Activated naive CD4-positive, alpha-beta T cell treated with anti-CD3 and anti-CD28 coated beads for 36 hours (primary cell): ENCODE measurements at regions of chr1 and their contacts with region 1.

Region 1: GRCh38 chr1:27940297-27940696 is 5.5 kb downstream of the SMPDL3B start:
- DNase-seq: peak; percentile 90
- H3K4me3 Mint-ChIP-seq: no peak overlapping the region
- H3K27ac Mint-ChIP-seq: peak overlapping the region; percentile 15
- H3K4me1 Mint-ChIP-seq: peaks cover 26% of the 10 kb centered on the region
- H3K27me3 Mint-ChIP-seq: peaks cover 7% of the 10 kb centered on the region

Region 2: DNA sequence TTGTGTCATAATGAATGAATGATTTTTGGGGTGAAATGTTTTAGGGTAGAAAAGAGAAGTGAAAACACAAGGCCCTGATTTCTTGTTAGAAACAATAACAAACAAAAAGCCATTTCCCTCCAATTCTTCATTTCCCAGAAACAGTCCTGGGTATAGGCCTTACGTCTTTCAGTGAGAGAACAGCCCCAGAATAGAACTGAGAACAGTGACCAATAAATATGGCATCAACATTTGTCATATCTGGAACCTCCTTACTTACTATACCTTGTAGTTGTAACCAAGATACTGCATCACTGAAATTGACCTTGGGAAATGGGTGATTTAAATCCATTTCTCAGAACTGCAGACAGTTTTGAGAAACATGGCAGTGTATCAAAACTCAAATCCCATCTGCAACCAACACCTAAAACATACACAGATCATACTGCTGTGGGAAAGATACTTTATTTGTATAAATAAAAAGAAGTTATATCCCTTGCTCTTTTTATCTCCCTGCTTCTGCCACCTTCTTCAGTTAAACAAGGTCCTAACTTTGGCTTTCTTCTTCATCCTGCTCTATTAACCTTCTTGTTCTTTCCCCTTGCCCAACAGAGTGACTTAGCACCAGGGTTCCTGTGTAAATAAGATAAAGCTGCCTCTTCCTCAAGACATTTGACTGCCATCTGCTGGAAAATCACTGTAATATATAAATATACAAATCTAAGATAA is 39.0 kb after region 1 on chr1:
- CTCF ChIA-PET with region 1: interaction called, 6 read pairs
- intact Hi-C with region 1: loop called (anchors 1 kb)
- DNase-seq: no peak
- H3K4me3 Mint-ChIP-seq: no peak overlapping the region
- H3K27ac Mint-ChIP-seq: no peak overlapping the region
- H3K4me1 Mint-ChIP-seq: no peaks in the 10 kb centered on the region
- H3K27me3 Mint-ChIP-seq: no peaks in the 10 kb centered on the region

Region 3: DNA sequence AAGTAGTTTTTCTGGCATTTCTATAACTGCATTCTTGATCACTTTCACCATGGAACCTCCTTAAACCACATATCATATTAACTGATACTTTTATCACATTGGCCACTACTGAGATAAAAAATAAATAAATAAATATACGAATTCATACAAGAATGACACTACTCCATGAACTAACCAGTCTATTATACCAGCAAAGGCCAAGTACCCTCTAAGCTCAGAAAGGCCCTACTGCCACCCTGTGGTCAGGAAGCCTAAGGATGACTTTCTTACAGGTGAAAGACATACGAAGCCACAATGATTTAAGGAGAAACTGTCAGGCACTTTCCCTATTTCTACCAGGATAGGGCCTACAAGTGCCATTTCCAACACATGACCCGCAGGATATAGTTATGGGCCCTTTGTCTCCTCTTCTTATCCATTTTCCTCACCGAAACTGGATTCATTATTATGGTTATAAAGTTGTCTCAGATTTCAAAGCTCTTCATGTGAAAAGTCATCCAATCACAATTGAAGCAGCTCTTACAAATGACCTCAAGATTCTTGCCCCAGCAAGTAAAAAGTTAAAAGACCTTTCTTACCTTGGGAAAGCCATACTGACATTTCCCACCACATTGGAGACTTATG is 268.6 kb after region 1 on chr1:
- CTCF ChIA-PET with region 1: no interaction called
- intact Hi-C with region 1: loop called (anchors 2 kb)
- DNase-seq: peak; percentile 82
- H3K4me3 Mint-ChIP-seq: no peak overlapping the region
- H3K27ac Mint-ChIP-seq: no peak overlapping the region
- H3K4me1 Mint-ChIP-seq: peaks cover 2% of the 10 kb centered on the region
- H3K27me3 Mint-ChIP-seq: no peaks in the 10 kb centered on the region

Region 4: DNA sequence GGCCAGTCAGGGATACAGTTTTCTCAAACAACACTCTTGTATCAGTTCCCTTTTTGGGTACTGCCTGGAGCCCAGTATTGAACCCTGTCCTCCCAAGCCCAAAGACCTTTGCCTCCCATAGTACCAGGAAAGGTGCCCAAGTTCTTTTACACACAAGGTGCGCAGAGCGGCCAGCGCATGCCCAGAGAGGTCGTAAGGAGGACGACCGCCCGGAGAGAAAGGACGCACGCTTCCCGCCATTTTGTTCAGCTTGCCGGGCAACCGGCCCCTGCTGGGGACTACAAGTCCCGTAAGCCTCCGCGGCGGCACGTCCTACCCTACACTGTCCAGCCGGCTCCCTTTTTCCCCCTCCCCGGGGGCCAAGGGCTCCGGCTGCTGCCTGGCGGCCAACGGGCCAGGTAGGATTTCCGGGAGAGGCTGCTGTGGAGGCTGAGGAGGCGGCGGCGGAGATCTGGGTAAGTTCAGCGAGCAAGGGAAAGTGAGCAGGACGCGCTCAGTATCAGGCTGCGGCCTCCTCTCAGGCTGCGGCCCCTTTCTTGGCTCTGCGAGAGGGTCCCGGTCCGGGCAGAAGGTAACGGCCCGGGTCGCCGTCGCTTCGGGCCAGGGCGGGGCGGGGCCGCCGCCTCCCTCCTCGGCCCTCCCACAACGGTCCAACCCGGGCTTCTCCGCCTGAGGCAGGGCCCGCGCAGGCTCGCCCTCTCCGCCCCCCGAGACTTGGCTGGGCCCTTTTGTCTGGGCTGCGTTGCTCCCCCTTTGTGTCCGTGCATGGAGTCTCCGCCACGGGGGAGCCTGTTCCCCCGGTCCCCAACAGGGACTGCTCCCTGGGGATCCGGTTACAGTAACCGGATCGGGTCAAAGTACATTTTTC is 429.3 kb after region 1 on chr1 and contains the start of gene PHACTR4:
- CTCF ChIA-PET with region 1: no interaction called
- intact Hi-C with region 1: no loop called
- DNase-seq: peak; percentile 86
- H3K4me3 Mint-ChIP-seq: peak within 1 kb of the TSS; percentile 85
- H3K27ac Mint-ChIP-seq: peak within 1 kb of the TSS; percentile 92
- H3K4me1 Mint-ChIP-seq: peaks cover 25% of the 10 kb centered on the region
- H3K27me3 Mint-ChIP-seq: no peaks in the 10 kb centered on the region
- total RNA-seq, gene PHACTR4: 16.3 to 17.2 TPM